Stomach (tissue), 19 donors: ENCODE measurements at regions of chr3 and their contacts with region 1.

Region 1: GRCh38 chr3:7285505-7285904 is 424.6 kb downstream of the GRM7 start:
- DNase-seq: peak in 1 of 2 donors; percentile 16
- H3K4me3 ChIP-seq: no peak overlapping the region
- H3K27ac ChIP-seq: no peak overlapping the region
- H3K4me1 ChIP-seq: peaks cover 0 to 4% (median 0%) of the 10 kb centered on the region in 4 donors
- H3K27me3 ChIP-seq: no peaks in the 10 kb centered on the region
- CTCF ChIP-seq: peak in 2 of 7 experiments; percentile 9 to 29
- EP300 ChIP-seq: no peak
- POLR2A ChIP-seq: no peak

Region 2: GRCh38 chr3:7166460-7166859 is 119.0 kb before region 1 on chr3:
- intact Hi-C with region 1: no loop called
- DNase-seq: peak in 1 of 2 donors; percentile 8
- H3K4me3 ChIP-seq: no peak overlapping the region
- H3K27ac ChIP-seq: no peak overlapping the region
- H3K4me1 ChIP-seq: no peaks in the 10 kb centered on the region
- H3K27me3 ChIP-seq: no peaks in the 10 kb centered on the region
- CTCF ChIP-seq: no peak
- EP300 ChIP-seq: no peak
- POLR2A ChIP-seq: no peak

Region 3: GRCh38 chr3:7546253-7546652 is 260.7 kb after region 1 on chr3:
- intact Hi-C with region 1: loop called (anchors 10 kb)
- DNase-seq: peak; percentile 31 to 58
- H3K4me3 ChIP-seq: no peak overlapping the region
- H3K27ac ChIP-seq: no peak overlapping the region
- H3K4me1 ChIP-seq: no peaks in the 10 kb centered on the region
- H3K27me3 ChIP-seq: no peaks in the 10 kb centered on the region
- CTCF ChIP-seq: peak in 3 of 7 experiments; percentile 13 to 44 (median 42)
- EP300 ChIP-seq: no peak
- POLR2A ChIP-seq: no peak